Activated CD4-positive, alpha-beta T cell treated with anti-CD3 and anti-CD28 coated beads, Interleukin-2, amount 10 ng/mL, durations not matched to agents 24 days and 14 days (primary cell): ENCODE measurements at regions of chrX and their contacts with region 1.

Region 1: GRCh38 chrX:154918060-154918483 is 31.9 kb downstream of the F8A1 start:
- DNase-seq: peak; percentile 70
- H3K4me3 Mint-ChIP-seq: peak overlapping the region; percentile 73
- H3K27ac Mint-ChIP-seq: peak overlapping the region; percentile 43
- H3K4me1 Mint-ChIP-seq: peaks cover 3% of the 10 kb centered on the region
- H3K27me3 Mint-ChIP-seq: peaks cover 20% of the 10 kb centered on the region

Region 2: GRCh38 chrX:155148724-155149537 is 230.9 kb after region 1 on chrX:
- intact Hi-C with region 1: loop called (anchors 5 kb)
- DNase-seq: peak; percentile 79
- H3K4me3 Mint-ChIP-seq: no peak overlapping the region
- H3K27ac Mint-ChIP-seq: no peak overlapping the region
- H3K4me1 Mint-ChIP-seq: peaks cover 6% of the 10 kb centered on the region
- H3K27me3 Mint-ChIP-seq: peaks cover 5% of the 10 kb centered on the region